GM18951 (cell line): ENCODE measurements at regions of chr17 and their contacts with region 1.

Region 1: DNA sequence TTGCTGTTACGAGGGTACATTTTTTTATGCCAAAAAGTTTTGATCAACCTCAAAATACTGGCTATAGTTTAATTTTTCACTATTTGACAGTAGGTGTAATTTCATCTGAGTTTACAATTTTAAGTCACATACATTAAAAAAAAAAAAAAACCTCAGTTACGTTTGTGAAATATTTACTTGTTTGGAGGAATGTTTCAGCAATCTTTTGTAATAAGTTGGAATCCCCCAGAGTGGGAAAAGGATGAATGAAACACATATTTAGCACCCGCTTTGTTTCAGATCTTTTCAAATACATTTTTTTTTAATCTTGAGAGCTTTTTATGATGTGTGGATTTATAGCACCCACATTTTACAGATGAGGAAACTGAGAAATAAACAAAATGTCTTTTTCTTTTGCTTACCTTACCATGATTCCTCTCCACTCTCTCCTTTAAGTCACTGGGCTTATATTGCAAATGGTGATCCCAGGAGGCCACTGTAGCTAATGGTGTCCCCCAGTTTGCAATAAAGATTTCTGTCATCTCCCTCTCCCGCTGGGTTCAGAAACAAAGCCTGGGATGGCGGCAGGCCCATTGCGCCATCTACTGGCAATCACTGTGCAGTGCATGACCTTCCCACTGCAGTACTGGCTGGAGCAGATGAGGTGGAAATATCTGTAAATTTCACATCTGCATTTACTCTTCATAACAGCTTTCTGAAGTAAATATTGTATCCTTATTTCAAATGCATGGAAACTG is 27.7 kb downstream of the TBC1D3B start:
- POLR2A ChIP-seq: no peak

Region 2: DNA sequence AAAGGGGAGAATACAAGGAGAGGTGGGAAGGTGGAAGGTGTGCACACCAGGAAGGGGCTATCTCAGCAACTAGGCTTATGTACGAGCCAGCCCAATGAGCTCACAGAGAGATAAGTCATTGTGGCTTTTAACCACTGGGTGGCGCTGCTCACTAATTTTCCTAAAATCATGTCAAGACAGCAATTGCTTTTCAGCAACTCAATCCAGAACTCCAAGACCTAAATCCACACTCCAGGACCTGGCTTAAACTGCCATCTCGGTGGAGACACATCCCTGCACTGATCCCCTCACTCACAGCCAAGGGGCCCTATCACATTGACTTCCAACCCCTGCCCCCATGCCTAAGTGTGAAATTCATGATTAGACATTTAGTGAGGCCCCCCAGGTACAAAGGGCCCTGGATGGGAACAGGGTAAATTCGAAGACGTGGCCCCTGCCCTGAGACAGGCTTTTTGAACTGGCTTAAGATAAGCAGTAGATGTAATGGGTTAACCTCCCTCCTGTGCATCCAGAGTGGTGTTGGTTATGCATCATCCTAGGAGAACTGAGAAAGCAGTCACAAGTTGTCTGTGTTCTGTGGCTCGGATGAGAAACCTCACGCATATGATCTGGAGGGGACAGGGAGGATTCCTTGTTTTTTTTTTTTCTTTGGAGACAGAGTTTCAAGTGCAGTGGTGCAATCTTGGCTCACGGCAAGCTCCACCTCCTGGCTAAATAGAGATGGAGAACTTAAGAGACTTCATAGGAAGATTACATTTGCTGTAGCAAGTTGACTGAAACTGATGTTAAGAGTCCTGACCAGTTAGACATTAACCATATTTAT is 179.0 kb before region 1 on chr17:
- in situ Hi-C with region 1: loop called (anchors 5 kb)
- POLR2A ChIP-seq: no peak

Region 3: GRCh38 chr17:36072431-36073121 is 76.2 kb before region 1 on chr17:
- in situ Hi-C with region 1: loop called (anchors 5 kb)
- POLR2A ChIP-seq: no peak